ENCODE measurements at regions of chr7 and their contacts with region 1.

Region 1: DNA sequence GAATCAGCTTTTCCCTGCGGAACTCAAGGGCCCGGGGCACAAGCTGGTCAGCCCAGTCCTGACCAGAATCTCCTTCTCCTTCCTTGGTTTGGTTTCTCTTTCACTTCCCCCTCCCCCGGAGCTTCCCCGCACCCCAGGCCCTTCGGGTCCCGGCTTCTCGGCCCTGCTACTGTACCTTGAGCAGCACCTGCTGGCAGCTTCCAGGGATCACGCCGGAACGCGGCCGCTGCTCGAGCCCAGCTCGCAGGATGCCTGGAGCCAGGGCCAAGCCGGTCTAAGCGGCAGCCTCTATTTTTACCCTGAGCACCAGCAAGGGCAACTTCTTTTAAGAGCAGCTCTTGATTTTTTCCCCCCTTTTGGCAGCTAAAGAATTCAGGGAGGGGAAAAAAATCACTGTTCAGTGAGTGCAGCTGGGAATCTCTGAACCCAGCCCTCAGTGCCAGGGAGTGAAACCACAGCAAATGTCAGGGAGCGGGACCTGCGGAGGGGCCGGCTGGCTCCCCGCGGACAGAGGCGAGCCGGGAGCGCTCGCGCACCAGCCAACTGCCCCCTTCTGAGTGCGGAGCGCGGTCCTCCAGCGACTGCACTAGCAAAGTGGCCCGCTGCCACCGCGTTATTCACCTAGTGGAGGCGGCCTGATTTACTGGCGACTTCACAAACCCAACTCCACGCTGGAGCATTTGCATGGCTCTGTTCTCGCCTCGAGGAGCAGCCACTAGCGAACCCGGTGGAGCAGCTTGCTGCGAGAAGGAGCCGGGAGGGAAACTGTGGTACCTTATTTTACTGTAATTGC is 2.4 kb upstream of the INHBA start:
- DNase-seq: peak; percentile 93 to 95
- ATAC-seq: peak; percentile 90
- H3K4me3 ChIP-seq: peak overlapping the region; percentile 40 to 73
- H3K27ac ChIP-seq: peak overlapping the region; percentile 79 to 91
- H3K4me1 ChIP-seq: peaks cover 2% of the 10 kb centered on the region in 2 donors
- H3K27me3 ChIP-seq: no peaks in the 10 kb centered on the region

Region 2: GRCh38 chr7:40200791-40201190 is 1504.5 kb before region 1 on chr7:
- intact Hi-C with region 1: loop called in 1 of 2 experiments (anchors 10 kb)
- DNase-seq: no peak
- ATAC-seq: peak; percentile 62
- H3K4me3 ChIP-seq: no peak overlapping the region
- H3K27ac ChIP-seq: no peak overlapping the region
- H3K4me1 ChIP-seq: peaks cover 0 to 11% of the 10 kb centered on the region in 2 donors
- H3K27me3 ChIP-seq: no peaks in the 10 kb centered on the region

Region 3: GRCh38 chr7:40232242-40232893 is 1472.9 kb before region 1 on chr7:
- intact Hi-C with region 1: loop called (anchors 5 to 10 kb)
- DNase-seq: no peak
- ATAC-seq: no peak
- H3K4me3 ChIP-seq: no peak overlapping the region
- H3K27ac ChIP-seq: no peak overlapping the region
- H3K4me1 ChIP-seq: no peaks in the 10 kb centered on the region
- H3K27me3 ChIP-seq: no peaks in the 10 kb centered on the region

Region 4: GRCh38 chr7:40329601-40330153 is 1375.6 kb before region 1 on chr7:
- intact Hi-C with region 1: loop called (anchors 5 to 10 kb)
- DNase-seq: no peak
- ATAC-seq: peak; percentile 81
- H3K4me3 ChIP-seq: no peak overlapping the region
- H3K27ac ChIP-seq: peak overlapping the region in 1 of 2 donors; percentile 68
- H3K4me1 ChIP-seq: peaks cover 0 to 1% of the 10 kb centered on the region in 2 donors
- H3K27me3 ChIP-seq: no peaks in the 10 kb centered on the region

Region 5: GRCh38 chr7:40843338-40843985 is 861.8 kb before region 1 on chr7:
- intact Hi-C with region 1: loop called in 1 of 2 experiments (anchors 10 kb)
- DNase-seq: no peak
- ATAC-seq: peak; percentile 36
- H3K4me3 ChIP-seq: no peak overlapping the region
- H3K27ac ChIP-seq: peak overlapping the region in 1 of 2 donors; percentile 77
- H3K4me1 ChIP-seq: peaks cover 2 to 3% of the 10 kb centered on the region in 2 donors
- H3K27me3 ChIP-seq: no peaks in the 10 kb centered on the region

Region 6: DNA sequence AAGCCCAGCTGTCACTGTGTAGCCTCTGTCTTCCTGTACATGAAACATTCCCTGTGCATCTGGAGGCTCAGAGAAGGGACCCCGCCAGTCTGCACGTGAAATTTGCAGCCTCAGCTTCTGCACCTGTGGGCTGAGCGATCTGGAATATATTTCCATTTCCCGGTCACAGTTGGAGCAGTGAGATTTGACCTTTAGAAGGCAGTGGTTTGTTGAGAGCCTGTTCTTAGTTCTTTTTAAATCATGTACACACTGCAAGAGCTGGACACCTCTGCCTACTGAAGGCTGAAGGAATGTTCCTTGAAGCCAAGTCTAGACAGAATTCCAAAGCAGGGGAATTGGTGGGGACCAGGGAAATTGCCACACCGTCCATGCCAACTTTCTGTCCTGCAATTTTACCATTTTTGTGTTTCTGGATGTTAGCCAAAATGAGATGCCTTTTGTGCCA is 709.0 kb before region 1 on chr7:
- intact Hi-C with region 1: loop called in 1 of 2 experiments (anchors 5 kb)
- DNase-seq: no peak
- ATAC-seq: peak; percentile 45
- H3K4me3 ChIP-seq: no peak overlapping the region
- H3K27ac ChIP-seq: no peak overlapping the region
- H3K4me1 ChIP-seq: peaks cover 6 to 10% of the 10 kb centered on the region in 2 donors
- H3K27me3 ChIP-seq: no peaks in the 10 kb centered on the region

Region 7: DNA sequence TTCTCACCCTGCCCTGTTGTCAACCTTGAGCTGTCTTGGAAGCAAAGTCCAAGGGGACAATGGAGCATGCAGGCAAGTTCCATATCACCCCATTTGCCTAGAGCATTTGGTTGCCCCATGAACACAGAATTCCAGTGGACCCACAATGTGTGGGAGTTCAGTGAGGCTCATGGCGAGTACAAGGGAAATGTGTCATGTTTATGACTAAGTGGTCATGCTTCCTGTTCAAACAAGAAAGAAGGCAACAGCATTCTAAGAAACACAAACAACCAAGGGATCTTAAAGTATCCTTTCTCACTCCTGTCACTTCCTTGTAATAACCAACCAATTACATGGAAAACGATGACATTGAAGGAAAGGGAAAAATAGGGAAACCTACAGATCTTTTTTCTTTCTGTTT is 515.4 kb before region 1 on chr7:
- intact Hi-C with region 1: loop called (anchors 5 to 10 kb)
- DNase-seq: no peak
- ATAC-seq: no peak
- H3K4me3 ChIP-seq: no peak overlapping the region
- H3K27ac ChIP-seq: peak overlapping the region in 1 of 2 donors; percentile 42
- H3K4me1 ChIP-seq: peaks cover 7 to 10% of the 10 kb centered on the region in 2 donors
- H3K27me3 ChIP-seq: no peaks in the 10 kb centered on the region

Region 8: GRCh38 chr7:41559426-41559825 is 145.9 kb before region 1 on chr7:
- intact Hi-C with region 1: no loop called
- DNase-seq: no peak
- ATAC-seq: no peak
- H3K4me3 ChIP-seq: no peak overlapping the region
- H3K27ac ChIP-seq: no peak overlapping the region
- H3K4me1 ChIP-seq: no peaks in the 10 kb centered on the region
- H3K27me3 ChIP-seq: no peaks in the 10 kb centered on the region